ENCODE measurements at regions of chr5 and their contacts with region 1.

Region 1: GRCh38 chr5:139374909-139375308 is 8.2 kb downstream of the SLC23A1 start:
- DNase-seq: no peak
- H3K4me3 ChIP-seq: no peak overlapping the region
- H3K27ac ChIP-seq: no peak overlapping the region
- H3K4me1 ChIP-seq: peaks cover 0 to 7% (median 4%) of the 10 kb centered on the region in 4 experiments
- H3K27me3 ChIP-seq: no peaks in the 10 kb centered on the region

Region 2: DNA sequence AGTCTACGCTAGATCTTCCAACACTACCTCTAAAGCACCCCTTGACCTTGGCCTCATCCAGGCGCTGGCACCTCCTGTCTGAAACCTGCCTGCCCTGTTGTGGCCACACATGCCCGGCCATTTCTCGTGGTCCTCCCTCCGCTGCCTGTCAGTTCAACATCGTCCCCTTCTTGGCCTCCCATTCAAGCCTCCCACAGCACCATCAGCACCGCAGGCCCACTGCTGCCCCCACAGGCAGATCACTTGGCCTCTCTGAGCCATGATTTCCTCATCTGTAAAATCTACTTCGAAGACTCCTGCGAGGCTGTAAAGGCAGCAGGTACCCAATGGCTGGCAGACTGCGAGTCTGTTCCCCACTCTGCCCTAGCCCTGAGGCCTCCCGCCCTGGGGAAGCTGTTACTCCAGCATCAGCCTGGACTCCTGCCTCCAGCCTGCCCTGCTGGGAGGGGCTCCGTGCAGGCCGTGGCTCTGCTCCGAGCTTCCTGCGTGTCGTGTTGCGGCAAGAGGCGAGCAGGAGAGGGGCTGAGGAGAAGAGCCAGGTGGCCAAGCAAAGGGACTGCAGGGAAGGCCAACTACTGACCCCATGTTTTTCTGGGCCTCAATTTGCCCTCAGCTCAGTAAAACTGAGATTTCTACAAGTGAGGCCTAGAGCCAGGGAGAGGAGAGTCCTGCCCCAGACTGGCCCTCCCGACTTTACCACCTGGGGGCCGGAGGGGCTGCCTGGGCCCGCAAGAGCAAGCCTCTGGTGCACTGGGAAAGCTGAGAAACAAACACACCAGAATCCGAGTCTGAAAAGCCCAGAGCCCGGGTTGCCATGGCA is 429.3 kb before region 1 on chr5:
- CTCF ChIA-PET with region 1: no interaction called
- POLR2A ChIA-PET with region 1: no interaction called
- DNase-seq: no peak
- H3K4me3 ChIP-seq: no peak overlapping the region
- H3K27ac ChIP-seq: no peak overlapping the region
- H3K4me1 ChIP-seq: peaks cover 0 to 22% (median 19%) of the 10 kb centered on the region in 4 experiments
- H3K27me3 ChIP-seq: no peaks in the 10 kb centered on the region

Region 3: DNA sequence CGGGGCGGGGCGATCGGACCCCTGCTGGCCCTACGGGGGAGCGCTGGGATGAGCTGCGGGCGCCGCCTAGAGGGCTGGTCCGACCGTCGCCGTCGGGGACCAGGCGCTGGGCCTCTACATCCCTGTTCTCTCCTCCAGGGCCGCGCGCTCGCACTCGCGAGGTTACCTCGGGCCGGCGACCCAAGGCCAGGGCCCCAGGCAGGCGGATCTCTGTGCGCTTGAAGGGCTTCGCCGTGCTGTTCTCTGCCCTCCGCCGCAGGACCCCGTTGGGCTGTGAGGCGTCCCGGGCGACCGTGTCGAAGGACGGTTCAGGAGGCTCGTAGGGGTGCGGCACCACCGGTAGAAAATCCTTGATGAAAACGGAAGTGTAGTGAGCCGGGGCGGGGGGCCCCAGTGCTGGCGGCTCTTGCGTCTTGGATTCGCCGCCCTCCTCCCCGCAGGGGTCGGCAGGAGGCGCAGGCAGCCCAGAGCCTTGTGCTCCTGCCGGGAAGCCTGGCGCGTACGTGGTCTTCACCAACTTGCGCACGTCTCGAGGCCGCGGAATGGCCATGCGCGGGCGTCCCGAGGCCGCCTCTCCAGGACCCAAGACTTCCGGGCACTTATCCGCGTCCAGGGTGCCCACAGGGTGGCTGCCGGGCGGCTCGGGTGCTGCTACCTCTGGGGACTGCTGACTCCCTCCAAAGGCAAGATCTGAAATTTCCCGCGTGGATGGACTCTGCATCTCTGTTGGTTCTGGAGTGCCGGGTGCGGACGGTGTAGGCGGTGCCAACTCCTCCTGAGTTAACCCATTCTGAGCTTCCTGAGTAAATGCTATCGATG is 18.0 kb after region 1 on chr5:
- CTCF ChIA-PET with region 1: interaction called, 48 read pairs
- POLR2A ChIA-PET with region 1: interaction called, 5 read pairs
- DNase-seq: peak; percentile 91 to 93 (median 92)
- H3K4me3 ChIP-seq: peak overlapping the region; percentile 47 to 81 (median 72)
- H3K27ac ChIP-seq: peak overlapping the region in 1 of 2 experiments; percentile 95
- H3K4me1 ChIP-seq: peaks cover 0 to 73% (median 68%) of the 10 kb centered on the region in 4 experiments
- H3K27me3 ChIP-seq: no peaks in the 10 kb centered on the region

Region 4: GRCh38 chr5:139410993-139411828 is 36.3 kb after region 1 on chr5:
- CTCF ChIA-PET with region 1: no interaction called
- POLR2A ChIA-PET with region 1: no interaction called
- DNase-seq: no peak
- H3K4me3 ChIP-seq: no peak overlapping the region
- H3K27ac ChIP-seq: no peak overlapping the region
- H3K4me1 ChIP-seq: peaks cover 3 to 28% (median 13%) of the 10 kb centered on the region in 4 experiments
- H3K27me3 ChIP-seq: no peaks in the 10 kb centered on the region

Region 5: DNA sequence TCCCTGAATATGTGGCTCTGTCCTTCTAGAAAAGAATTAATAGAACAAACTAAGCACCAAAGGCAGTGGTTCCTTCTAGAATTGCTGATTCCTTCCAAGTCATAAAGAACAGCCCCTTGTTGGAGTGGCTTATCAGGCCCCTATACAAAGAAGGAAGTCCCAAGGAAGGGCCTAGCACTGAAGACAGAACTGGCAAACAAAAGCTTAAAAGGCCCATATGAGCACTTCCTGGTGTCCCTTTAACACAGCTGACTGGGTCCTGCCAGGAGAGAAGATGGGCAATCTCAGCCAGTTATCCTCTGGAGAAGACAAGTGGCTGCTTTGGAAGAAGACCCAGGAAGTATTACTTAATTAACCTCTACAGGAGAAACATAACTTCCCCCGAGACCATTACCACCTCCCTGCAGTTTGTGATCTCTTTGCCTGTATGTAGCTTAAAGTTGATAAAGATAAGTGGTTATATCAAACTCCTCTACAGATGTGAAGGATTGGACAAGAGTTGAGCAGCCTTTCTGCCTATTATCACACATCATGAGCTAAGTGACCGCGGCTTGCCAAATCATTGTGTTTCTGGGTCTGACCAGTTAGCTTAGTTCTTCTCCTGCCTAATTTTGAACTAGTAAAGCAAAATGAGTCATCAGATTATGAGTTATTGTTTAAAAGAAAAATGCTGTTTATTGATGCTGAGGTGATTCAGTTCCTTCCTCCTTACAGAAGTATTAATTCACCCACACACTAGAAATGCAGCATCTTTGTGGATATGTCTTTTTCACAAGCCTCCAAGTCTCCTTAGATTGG is 120.9 kb after region 1 on chr5:
- CTCF ChIA-PET with region 1: no interaction called
- POLR2A ChIA-PET with region 1: no interaction called
- DNase-seq: peak in 2 of 3 donors; percentile 41 to 65
- H3K4me3 ChIP-seq: no peak overlapping the region
- H3K27ac ChIP-seq: peak overlapping the region in 1 of 2 experiments; percentile 12
- H3K4me1 ChIP-seq: peaks cover 8 to 28% (median 17%) of the 10 kb centered on the region in 4 experiments
- H3K27me3 ChIP-seq: no peaks in the 10 kb centered on the region

Measured in common myeloid progenitor, CD34-positive (primary cell).